ENCODE measurements at regions of chr10 and their contacts with region 1.

Region 1: DNA sequence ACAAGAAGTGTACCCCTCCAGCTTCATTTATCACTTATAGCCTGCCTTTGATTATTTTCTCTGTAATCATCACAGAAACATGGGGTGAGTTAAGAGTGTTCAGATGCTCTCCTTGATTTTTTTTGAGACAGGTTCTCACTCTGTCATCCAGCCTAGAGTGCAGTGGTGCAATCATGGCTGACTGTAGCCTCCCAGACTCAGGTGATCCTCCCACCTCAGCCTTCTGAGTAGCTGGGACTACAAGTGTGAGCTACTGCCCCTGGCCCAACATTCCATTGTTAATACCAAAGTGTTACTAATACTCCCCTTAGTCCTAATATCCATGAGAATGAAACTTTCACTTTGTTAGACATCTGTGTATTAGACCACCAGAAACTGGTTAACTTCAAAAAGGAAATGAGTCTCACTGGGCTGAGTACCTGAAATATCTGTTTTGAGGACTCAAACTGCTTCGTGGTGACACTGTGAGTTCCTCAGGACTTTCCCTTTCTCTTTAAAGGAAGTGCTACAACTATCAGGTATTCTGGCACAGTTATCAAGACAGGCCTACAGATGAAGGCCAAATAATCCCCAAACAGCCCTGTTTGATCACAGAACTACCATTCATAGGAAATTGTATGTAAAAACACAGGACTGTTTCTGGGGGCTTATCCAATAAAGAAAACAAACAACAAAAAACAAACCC is 20.5 kb upstream of the CFAP70 start:
- DNase-seq: no peak
- ATAC-seq: peak; percentile 7; the same call in 1 of the 2 replicates
- H3K4me3 ChIP-seq: no peak overlapping the region
- H3K27ac ChIP-seq: no peak overlapping the region
- H3K4me1 ChIP-seq: no peaks in the 10 kb centered on the region
- H3K27me3 ChIP-seq: no peaks in the 10 kb centered on the region
- CTCF ChIP-seq: no peak

Region 2: GRCh38 chr10:74165530-74165901 is 786.3 kb after region 1 on chr10:
- CTCF ChIA-PET with region 1: no interaction called
- POLR2A ChIA-PET with region 1: interaction called, 31 read pairs
- intact Hi-C with region 1: no loop called
- DNase-seq: peak; percentile 61
- ATAC-seq: peak; percentile 55
- H3K4me3 ChIP-seq: no peak overlapping the region
- H3K27ac ChIP-seq: no peak overlapping the region
- H3K4me1 ChIP-seq: peaks cover 15% of the 10 kb centered on the region
- H3K27me3 ChIP-seq: no peaks in the 10 kb centered on the region
- CTCF ChIP-seq: no peak